ENCODE measurements at regions of chr16 and their contacts with region 1.

Region 1: GRCh38 chr16:75555707-75556430 is at the start of gene TMEM231:
- DNase-seq: peak; percentile 98
- H3K4me3 Mint-ChIP-seq: peak within 1 kb of the TSS; percentile 91
- H3K27ac Mint-ChIP-seq: peak within 1 kb of the TSS; percentile 78
- H3K4me1 Mint-ChIP-seq: peaks cover 34% of the 10 kb centered on the region
- H3K27me3 Mint-ChIP-seq: no peaks in the 10 kb centered on the region
- CTCF ChIP-seq: no peak
- total RNA-seq, gene TMEM231: 17.6 and 23.8 TPM in 2 replicates

Region 2: DNA sequence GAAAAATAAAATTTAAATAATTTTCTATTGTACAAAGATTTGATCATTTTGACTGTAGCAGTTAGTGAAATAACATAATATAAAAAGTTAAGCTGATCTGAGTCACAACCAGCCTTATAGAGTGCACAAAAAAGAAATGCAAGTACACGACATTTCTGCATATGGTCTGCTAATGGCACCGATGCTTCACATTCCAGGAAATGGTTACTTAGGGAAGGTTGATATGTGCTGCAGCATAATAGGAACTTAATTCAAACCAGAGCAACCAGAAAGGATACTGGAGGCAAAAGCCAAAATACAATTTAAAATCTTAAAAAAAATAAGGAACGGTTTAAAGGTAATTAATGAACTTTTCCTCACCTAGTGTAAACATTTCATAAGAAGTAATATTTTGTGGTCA is 112.6 kb before region 1 on chr16:
- CTCF ChIA-PET with region 1: no interaction called
- intact Hi-C with region 1: no loop called
- DNase-seq: no peak
- H3K4me3 Mint-ChIP-seq: no peak overlapping the region
- H3K27ac Mint-ChIP-seq: no peak overlapping the region
- H3K4me1 Mint-ChIP-seq: no peaks in the 10 kb centered on the region
- H3K27me3 Mint-ChIP-seq: no peaks in the 10 kb centered on the region
- CTCF ChIP-seq: no peak

Region 3: DNA sequence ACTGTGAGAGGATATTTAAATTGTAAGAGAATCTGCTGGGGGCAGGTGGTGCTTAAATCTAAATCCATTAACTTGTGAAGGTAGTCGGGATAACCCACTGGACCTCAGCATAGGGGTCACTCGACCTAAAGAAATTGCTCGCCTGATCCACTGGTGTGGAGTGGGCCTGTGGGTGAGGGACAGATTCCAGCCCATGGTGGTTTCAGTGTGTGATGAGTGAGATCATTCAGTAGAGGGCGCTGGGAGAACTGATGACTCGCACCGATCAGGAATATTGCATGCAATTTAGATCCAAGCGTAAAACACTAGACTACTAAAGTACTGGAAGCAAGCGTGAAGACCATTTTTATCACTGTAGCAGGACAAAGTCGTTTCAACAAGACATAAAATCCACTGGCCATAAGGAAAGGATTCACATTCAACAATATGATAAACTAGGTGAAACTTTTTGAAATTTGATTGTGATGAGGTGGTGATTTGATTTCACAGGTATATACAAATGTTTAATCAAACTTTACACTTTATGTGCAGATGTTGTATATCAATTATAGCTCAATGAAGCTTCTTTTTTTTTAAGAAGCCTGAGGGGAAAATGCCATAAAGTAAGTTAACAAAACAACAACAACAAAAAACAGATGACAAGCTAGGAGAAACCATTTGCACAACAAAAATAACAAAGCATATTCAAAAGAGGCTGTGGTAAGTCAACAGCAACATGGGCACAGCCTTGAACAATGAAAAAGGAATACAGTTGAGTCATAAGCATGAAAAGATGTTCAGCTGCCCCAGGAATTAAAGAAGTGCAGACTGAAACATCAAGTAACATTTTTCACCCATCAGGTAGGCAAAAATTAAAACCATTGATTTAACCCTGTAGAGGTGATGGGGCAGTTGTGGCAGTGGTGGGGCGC is 83.9 kb before region 1 on chr16:
- CTCF ChIA-PET with region 1: no interaction called
- intact Hi-C with region 1: loop called (anchors 2 kb)
- DNase-seq: peak; percentile 64
- H3K4me3 Mint-ChIP-seq: no peak overlapping the region
- H3K27ac Mint-ChIP-seq: no peak overlapping the region
- H3K4me1 Mint-ChIP-seq: peaks cover 9% of the 10 kb centered on the region
- H3K27me3 Mint-ChIP-seq: no peaks in the 10 kb centered on the region
- CTCF ChIP-seq: peak; percentile 55

Region 4: GRCh38 chr16:75566040-75566810 is 10.4 kb after region 1 on chr16 and contains the start of gene GABARAPL2:
- CTCF ChIA-PET with region 1: interaction called, 12 read pairs
- intact Hi-C with region 1: no loop called
- DNase-seq: peak; percentile 93
- H3K4me3 Mint-ChIP-seq: peak within 1 kb of the TSS; percentile 83
- H3K27ac Mint-ChIP-seq: peak within 1 kb of the TSS; percentile 75
- H3K4me1 Mint-ChIP-seq: peaks cover 32% of the 10 kb centered on the region
- H3K27me3 Mint-ChIP-seq: peaks cover 27% of the 10 kb centered on the region
- CTCF ChIP-seq: no peak
- total RNA-seq, gene GABARAPL2: 112 and 123 TPM in 2 replicates

Measured in Calu3 (cell line).